HEK293 (cell line): ENCODE measurements at regions of chr3 and their contacts with region 1.

Region 1: GRCh38 chr3:81338676-81339555 is 422.5 kb downstream of the GBE1 start:
- H3K4me3 ChIP-seq: no peak overlapping the region
- H3K27ac ChIP-seq: no peak overlapping the region
- H3K4me1 ChIP-seq: no peaks in the 10 kb centered on the region
- CTCF ChIP-seq: no peak

Region 2: GRCh38 chr3:81237181-81237580 is 101.7 kb before region 1 on chr3:
- CTCF ChIA-PET with region 1: no interaction called
- POLR2A ChIA-PET with region 1: no interaction called
- H3K4me3 ChIP-seq: no peak overlapping the region
- H3K27ac ChIP-seq: no peak overlapping the region
- H3K4me1 ChIP-seq: no peaks in the 10 kb centered on the region
- CTCF ChIP-seq: no peak

Region 3: DNA sequence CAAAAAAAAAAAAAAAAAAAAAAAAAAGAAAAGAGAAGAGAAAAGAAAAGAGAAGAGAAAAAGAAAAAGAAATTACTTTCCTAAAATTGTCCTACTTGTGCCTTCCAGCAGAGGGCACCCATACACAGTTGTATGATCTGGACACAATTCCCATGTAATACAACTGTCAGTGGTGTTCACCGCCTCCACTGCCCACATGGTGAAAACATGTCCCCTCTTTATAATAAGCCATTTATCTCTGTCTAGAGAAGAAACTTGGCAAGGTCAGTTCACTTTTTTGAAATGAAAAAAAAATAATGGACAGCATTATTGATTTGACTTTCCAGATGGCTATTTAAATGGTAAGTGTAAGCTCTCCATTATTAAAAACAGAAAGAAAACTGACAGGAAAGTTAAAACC is 36.9 kb before region 1 on chr3:
- CTCF ChIA-PET with region 1: interaction called, 25 read pairs
- POLR2A ChIA-PET with region 1: no interaction called
- H3K4me3 ChIP-seq: no peak overlapping the region
- H3K27ac ChIP-seq: no peak overlapping the region
- H3K4me1 ChIP-seq: no peaks in the 10 kb centered on the region
- CTCF ChIP-seq: no peak